CD8-positive, alpha-beta T cell (primary cell): ENCODE measurements at regions of chr15 and their contacts with region 1.

Region 1: GRCh38 chr15:48861813-48862431 is 16.0 kb upstream of the EID1 start:
- DNase-seq: peak in 7 of 9 experiments; percentile 9 to 80 (median 41)
- ATAC-seq: peak; percentile 63
- H3K4me3 ChIP-seq: no peak overlapping the region
- H3K4me3 Mint-ChIP-seq: no peak overlapping the region
- H3K27ac ChIP-seq: no peak overlapping the region
- H3K27ac Mint-ChIP-seq: no peak overlapping the region
- H3K4me1 ChIP-seq: no peaks in the 10 kb centered on the region
- H3K4me1 Mint-ChIP-seq: no peaks in the 10 kb centered on the region
- H3K27me3 ChIP-seq: no peaks in the 10 kb centered on the region
- H3K27me3 Mint-ChIP-seq: peaks cover 2% of the 10 kb centered on the region
- CTCF ChIP-seq: peak; percentile 94

Region 2: GRCh38 chr15:49145651-49146609 is 284.0 kb after region 1 on chr15:
- CTCF ChIA-PET with region 1: interaction called, 22 read pairs
- POLR2A ChIA-PET with region 1: no interaction called
- intact Hi-C with region 1: loop called (anchors 1 kb)
- DNase-seq: peak in 5 of 9 experiments; percentile 16 to 58 (median 22)
- ATAC-seq: no peak
- H3K4me3 ChIP-seq: no peak overlapping the region
- H3K4me3 Mint-ChIP-seq: no peak overlapping the region
- H3K27ac ChIP-seq: no peak overlapping the region
- H3K27ac Mint-ChIP-seq: no peak overlapping the region
- H3K4me1 ChIP-seq: peaks cover 28% of the 10 kb centered on the region
- H3K4me1 Mint-ChIP-seq: peaks cover 47% of the 10 kb centered on the region
- H3K27me3 ChIP-seq: no peaks in the 10 kb centered on the region
- H3K27me3 Mint-ChIP-seq: no peaks in the 10 kb centered on the region
- CTCF ChIP-seq: peak; percentile 70

Region 3: GRCh38 chr15:49421991-49422390 is 560.1 kb after region 1 on chr15:
- CTCF ChIA-PET with region 1: interaction called, 48 read pairs
- POLR2A ChIA-PET with region 1: no interaction called
- intact Hi-C with region 1: loop called in 1 of 2 experiments (anchors 1 kb)
- DNase-seq: peak in 7 of 9 experiments; percentile 8 to 69 (median 29)
- ATAC-seq: peak; percentile 44
- H3K4me3 ChIP-seq: no peak overlapping the region
- H3K4me3 Mint-ChIP-seq: peak overlapping the region; percentile 44
- H3K27ac ChIP-seq: no peak overlapping the region
- H3K27ac Mint-ChIP-seq: peak overlapping the region; percentile 62
- H3K4me1 ChIP-seq: no peaks in the 10 kb centered on the region
- H3K4me1 Mint-ChIP-seq: peaks cover 3% of the 10 kb centered on the region
- H3K27me3 ChIP-seq: no peaks in the 10 kb centered on the region
- H3K27me3 Mint-ChIP-seq: no peaks in the 10 kb centered on the region
- CTCF ChIP-seq: peak; percentile 80

Region 4: GRCh38 chr15:50051803-50052419 is 1190.0 kb after region 1 on chr15:
- CTCF ChIA-PET with region 1: no interaction called
- POLR2A ChIA-PET with region 1: no interaction called
- intact Hi-C with region 1: loop called in 1 of 2 experiments (anchors 5 kb)
- DNase-seq: peak in 2 of 9 experiments; percentile 20 to 41
- ATAC-seq: no peak
- H3K4me3 ChIP-seq: no peak overlapping the region
- H3K4me3 Mint-ChIP-seq: no peak overlapping the region
- H3K27ac ChIP-seq: no peak overlapping the region
- H3K27ac Mint-ChIP-seq: no peak overlapping the region
- H3K4me1 ChIP-seq: no peaks in the 10 kb centered on the region
- H3K4me1 Mint-ChIP-seq: no peaks in the 10 kb centered on the region
- H3K27me3 ChIP-seq: no peaks in the 10 kb centered on the region
- H3K27me3 Mint-ChIP-seq: no peaks in the 10 kb centered on the region
- CTCF ChIP-seq: no peak

Region 5: DNA sequence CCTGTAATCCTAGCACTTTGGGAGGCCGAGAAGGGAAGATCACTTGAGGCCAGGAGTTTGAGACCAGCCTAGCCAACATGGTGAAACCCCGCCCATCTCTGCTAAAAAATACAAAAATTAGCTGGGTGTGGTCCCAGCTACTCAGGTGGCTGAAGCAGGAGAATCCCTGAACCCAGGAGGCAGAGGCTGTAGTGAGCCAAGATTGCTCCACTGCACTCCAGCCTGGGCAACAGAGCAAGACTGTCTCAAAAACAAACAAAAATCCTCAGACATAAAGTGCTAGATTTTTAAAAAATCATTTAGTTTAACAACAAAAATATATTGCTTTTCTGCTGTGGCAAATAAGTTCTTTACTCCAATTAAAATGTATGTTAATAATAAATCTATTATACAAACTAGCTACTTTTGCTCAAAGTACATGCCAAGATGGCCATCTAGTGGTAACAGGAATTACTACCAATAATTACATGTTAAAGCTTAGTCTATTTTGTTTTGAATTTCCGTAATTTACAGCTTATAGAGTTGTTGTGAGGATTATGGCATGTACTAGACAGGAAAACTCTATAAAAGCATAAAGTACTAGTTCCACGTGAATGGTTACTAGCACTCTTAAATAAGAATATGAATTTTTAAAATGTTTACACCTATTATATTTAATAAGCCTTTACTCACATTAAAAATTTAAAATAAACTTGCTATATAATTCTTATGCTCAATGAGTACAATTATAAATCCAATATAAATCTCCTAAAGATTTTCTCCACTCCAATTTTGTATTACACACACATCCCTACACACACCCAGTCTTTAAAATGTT is 1454.1 kb after region 1 on chr15:
- CTCF ChIA-PET with region 1: interaction called, 3 read pairs
- POLR2A ChIA-PET with region 1: no interaction called
- intact Hi-C with region 1: loop called in 1 of 2 experiments (anchors 1 kb)
- DNase-seq: peak in 2 of 9 experiments; percentile 58 to 71
- ATAC-seq: peak; percentile 29
- H3K4me3 ChIP-seq: no peak overlapping the region
- H3K4me3 Mint-ChIP-seq: no peak overlapping the region
- H3K27ac ChIP-seq: no peak overlapping the region
- H3K27ac Mint-ChIP-seq: no peak overlapping the region
- H3K4me1 ChIP-seq: no peaks in the 10 kb centered on the region
- H3K4me1 Mint-ChIP-seq: peaks cover 19% of the 10 kb centered on the region
- H3K27me3 ChIP-seq: no peaks in the 10 kb centered on the region
- H3K27me3 Mint-ChIP-seq: no peaks in the 10 kb centered on the region
- CTCF ChIP-seq: peak; percentile 97